ENCODE measurements at regions of chr5 and their contacts with region 1.

Region 1: GRCh38 chr5:147576646-147577535 is 67.0 kb upstream of the DPYSL3 start:
- DNase-seq: peak; percentile 66
- ATAC-seq: peak; percentile 64
- H3K4me3 Mint-ChIP-seq: no peak overlapping the region
- H3K27ac Mint-ChIP-seq: no peak overlapping the region
- H3K4me1 Mint-ChIP-seq: no peaks in the 10 kb centered on the region
- H3K27me3 Mint-ChIP-seq: no peaks in the 10 kb centered on the region
- CTCF ChIP-seq: peak; percentile 76

Region 2: DNA sequence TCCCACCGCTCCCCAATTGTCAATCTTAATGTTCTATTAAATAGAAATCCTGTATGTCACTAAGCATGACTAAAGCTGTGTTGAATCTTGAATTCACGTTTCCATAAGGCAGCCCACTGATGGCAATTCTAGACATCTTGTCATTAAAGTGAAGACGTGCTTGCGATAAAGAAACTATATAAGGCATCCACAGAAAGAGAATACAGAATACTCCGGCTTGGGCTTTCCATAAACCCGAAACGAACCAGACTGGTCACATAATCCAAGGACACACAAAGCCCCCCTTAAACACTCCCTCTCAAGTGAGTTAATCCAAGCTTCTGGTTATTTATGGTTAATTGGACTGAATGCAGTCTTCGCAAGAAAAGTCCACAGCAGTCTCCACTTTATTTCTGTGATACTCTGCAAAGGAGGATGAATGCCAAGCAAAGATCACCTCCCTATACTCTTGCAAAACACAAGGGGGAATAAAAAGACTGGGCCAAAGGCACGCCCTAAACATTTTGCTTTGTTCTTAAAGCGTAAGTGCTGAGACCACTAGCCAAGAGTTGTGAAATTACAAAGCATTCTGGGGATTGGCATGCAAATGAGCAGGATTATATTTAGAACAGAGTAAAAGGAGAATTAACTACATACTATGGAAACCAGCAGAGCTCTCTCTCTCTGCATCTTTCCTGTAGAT is 121.8 kb before region 1 on chr5:
- CTCF ChIA-PET with region 1: interaction called, 5 read pairs
- POLR2A ChIA-PET with region 1: no interaction called
- intact Hi-C with region 1: loop called (anchors 5 kb)
- DNase-seq: no peak
- ATAC-seq: no peak
- H3K4me3 Mint-ChIP-seq: no peak overlapping the region
- H3K27ac Mint-ChIP-seq: no peak overlapping the region
- H3K4me1 Mint-ChIP-seq: peaks cover 9% of the 10 kb centered on the region
- H3K27me3 Mint-ChIP-seq: peaks cover 56% of the 10 kb centered on the region
- CTCF ChIP-seq: no peak

Region 3: GRCh38 chr5:147504011-147504410 is 72.9 kb before region 1 on chr5:
- CTCF ChIA-PET with region 1: no interaction called
- POLR2A ChIA-PET with region 1: no interaction called
- intact Hi-C with region 1: no loop called
- DNase-seq: no peak
- ATAC-seq: no peak
- H3K4me3 Mint-ChIP-seq: no peak overlapping the region
- H3K27ac Mint-ChIP-seq: no peak overlapping the region
- H3K4me1 Mint-ChIP-seq: no peaks in the 10 kb centered on the region
- H3K27me3 Mint-ChIP-seq: peaks cover 15% of the 10 kb centered on the region
- CTCF ChIP-seq: no peak

Region 4: GRCh38 chr5:147554271-147554817 is 22.5 kb before region 1 on chr5:
- CTCF ChIA-PET with region 1: no interaction called
- POLR2A ChIA-PET with region 1: no interaction called
- intact Hi-C with region 1: no loop called
- DNase-seq: no peak
- ATAC-seq: no peak
- H3K4me3 Mint-ChIP-seq: no peak overlapping the region
- H3K27ac Mint-ChIP-seq: no peak overlapping the region
- H3K4me1 Mint-ChIP-seq: no peaks in the 10 kb centered on the region
- H3K27me3 Mint-ChIP-seq: peaks cover 4% of the 10 kb centered on the region
- CTCF ChIP-seq: no peak

Region 5: GRCh38 chr5:148416921-148417320 is 840.0 kb after region 1 on chr5:
- CTCF ChIA-PET with region 1: no interaction called
- POLR2A ChIA-PET with region 1: no interaction called
- intact Hi-C with region 1: no loop called
- DNase-seq: no peak
- ATAC-seq: no peak
- H3K4me3 Mint-ChIP-seq: no peak overlapping the region
- H3K27ac Mint-ChIP-seq: no peak overlapping the region
- H3K4me1 Mint-ChIP-seq: peaks cover 4% of the 10 kb centered on the region
- H3K27me3 Mint-ChIP-seq: no peaks in the 10 kb centered on the region
- CTCF ChIP-seq: no peak

Measured in activated CD8-positive, alpha-beta T cell treated with anti-CD3 and anti-CD28 coated beads for 36 hours (primary cell).